Activated CD4-positive, alpha-beta memory T cell treated with anti-CD3 and anti-CD28 coated beads for 36 hours (primary cell): ENCODE measurements at regions of chr4 and their contacts with region 1.

Region 1: GRCh38 chr4:54233277-54233696 is 4.2 kb downstream of the PDGFRA start:
- DNase-seq: peak; percentile 85
- H3K4me3 Mint-ChIP-seq: peak overlapping the region; percentile 63
- H3K27ac Mint-ChIP-seq: no peak overlapping the region
- H3K4me1 Mint-ChIP-seq: peaks cover 24% of the 10 kb centered on the region
- H3K27me3 Mint-ChIP-seq: peaks cover 59% of the 10 kb centered on the region

Region 2: GRCh38 chr4:52545099-52546069 is 1687.9 kb before region 1 on chr4:
- CTCF ChIA-PET with region 1: interaction called, 11 read pairs
- POLR2A ChIA-PET with region 1: no interaction called
- intact Hi-C with region 1: no loop called
- DNase-seq: peak; percentile 75
- H3K4me3 Mint-ChIP-seq: no peak overlapping the region
- H3K27ac Mint-ChIP-seq: no peak overlapping the region
- H3K4me1 Mint-ChIP-seq: no peaks in the 10 kb centered on the region
- H3K27me3 Mint-ChIP-seq: peaks cover 4% of the 10 kb centered on the region

Region 3: DNA sequence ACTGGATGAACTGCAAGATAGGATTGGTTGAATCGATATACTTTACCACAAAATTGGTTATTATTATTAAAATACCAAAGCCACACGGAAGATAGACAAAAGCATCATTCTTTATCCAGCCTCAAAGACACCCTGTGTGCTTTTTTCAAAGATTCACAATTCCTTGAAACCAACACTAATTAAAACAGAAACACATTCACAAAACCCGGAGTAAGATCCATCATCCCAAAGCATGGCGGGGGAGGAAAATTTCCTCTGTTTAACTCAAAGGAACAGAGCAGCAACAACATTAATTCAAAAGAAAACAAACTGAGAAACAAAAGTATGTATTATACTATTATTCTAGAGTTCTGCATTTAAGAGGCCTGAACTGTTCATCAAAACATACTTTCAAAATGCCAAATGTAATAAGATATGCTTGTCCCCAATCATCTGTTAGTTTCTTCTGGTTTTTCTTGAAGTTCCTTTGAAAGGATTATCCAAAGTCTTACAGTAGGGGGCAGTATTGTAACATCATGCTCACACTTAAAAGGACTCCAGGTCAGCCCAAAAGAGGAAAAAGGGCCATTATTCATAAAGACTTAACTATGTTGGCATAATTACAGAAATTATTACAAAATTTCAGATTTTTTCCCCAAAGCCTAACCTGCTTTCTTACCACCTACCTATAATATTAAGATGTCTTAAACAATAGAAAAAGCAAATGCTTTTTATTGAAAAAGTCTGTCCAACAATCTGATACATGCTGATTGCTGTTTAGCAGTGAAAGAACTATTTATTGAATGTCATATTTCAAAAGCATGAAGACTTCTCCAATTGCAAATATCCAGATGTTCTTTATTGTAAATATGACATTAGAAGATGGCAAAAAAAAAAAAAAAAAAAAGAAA is 1036.2 kb before region 1 on chr4:
- CTCF ChIA-PET with region 1: interaction called, 26 read pairs
- POLR2A ChIA-PET with region 1: no interaction called
- intact Hi-C with region 1: loop called (anchors 1 kb)
- DNase-seq: no peak
- H3K4me3 Mint-ChIP-seq: no peak overlapping the region
- H3K27ac Mint-ChIP-seq: no peak overlapping the region
- H3K4me1 Mint-ChIP-seq: peaks cover 2% of the 10 kb centered on the region
- H3K27me3 Mint-ChIP-seq: no peaks in the 10 kb centered on the region

Region 4: DNA sequence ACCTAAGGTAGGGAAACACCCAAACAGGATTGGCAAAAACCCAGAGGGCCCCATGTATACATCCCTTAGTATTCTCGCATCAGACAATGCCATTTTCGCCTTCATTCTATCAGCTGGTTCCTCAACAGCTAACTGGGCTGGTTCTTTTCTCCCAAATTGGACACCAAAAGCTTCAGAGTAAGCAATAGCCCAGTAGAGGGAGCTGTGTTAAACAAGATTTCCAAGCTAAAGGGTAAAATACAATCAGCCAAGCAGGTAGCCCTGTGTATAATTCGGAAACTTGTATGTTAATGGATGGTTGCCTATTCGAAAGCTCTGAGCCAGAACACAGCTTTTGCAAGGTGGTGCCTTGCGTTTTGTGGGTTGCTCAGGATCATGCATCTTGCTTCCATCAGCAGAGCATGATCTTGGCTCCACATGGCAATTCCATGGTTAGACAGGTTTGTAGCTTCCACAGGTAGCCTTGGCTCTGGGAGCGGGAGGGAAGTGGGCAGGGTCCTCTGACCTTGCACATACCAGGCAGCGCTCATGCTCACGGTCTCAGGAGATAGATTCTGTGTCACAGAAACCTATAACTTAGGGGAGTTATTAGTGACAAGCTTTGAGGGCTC is 526.8 kb before region 1 on chr4:
- CTCF ChIA-PET with region 1: interaction called, 12 read pairs
- POLR2A ChIA-PET with region 1: no interaction called
- intact Hi-C with region 1: loop called (anchors 5 kb)
- DNase-seq: no peak
- H3K4me3 Mint-ChIP-seq: no peak overlapping the region
- H3K27ac Mint-ChIP-seq: no peak overlapping the region
- H3K4me1 Mint-ChIP-seq: peaks cover 2% of the 10 kb centered on the region
- H3K27me3 Mint-ChIP-seq: peaks cover 12% of the 10 kb centered on the region

Region 5: DNA sequence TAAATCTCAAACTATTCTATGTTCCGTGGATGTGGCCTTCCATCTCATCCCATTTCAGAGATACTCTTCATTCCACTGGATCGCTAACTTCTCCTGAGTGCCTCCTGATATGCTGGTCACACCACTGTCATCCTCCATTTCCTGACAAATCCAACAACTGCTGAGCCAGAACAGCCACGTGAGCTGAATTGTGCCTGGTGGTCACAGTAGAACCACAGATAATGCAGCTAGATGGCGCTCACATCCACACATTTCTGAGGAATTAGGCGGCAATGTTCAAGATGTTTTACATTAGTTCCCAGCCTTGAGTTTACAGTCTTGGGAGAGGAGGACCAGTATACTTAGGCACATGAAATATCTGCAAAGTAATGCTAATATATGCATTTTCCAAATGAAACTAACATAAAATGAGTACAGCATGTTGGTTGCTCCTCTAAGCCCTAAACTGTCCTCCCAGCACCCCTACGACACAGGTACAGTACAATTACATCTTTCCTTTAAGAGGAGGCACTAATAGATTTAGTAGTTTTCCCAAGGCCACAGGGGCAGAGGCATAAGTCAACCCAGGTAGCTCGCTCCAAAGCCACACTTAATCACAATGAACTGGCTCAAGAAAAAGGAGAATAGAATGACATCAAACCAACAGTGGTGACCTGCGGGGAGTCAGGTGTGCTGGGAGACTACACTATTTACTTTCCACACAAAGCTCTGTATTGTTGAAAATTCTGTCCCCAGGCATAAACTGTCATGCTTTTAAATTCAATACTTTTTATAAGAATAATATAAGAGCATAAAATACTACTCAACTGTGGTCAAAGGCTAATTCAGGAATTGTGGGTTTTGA is 303.1 kb before region 1 on chr4:
- CTCF ChIA-PET with region 1: interaction called, 99 read pairs
- POLR2A ChIA-PET with region 1: no interaction called
- intact Hi-C with region 1: loop called (anchors 5 kb)
- DNase-seq: peak; percentile 68
- H3K4me3 Mint-ChIP-seq: no peak overlapping the region
- H3K27ac Mint-ChIP-seq: no peak overlapping the region
- H3K4me1 Mint-ChIP-seq: no peaks in the 10 kb centered on the region
- H3K27me3 Mint-ChIP-seq: peaks cover 4% of the 10 kb centered on the region

Region 6: GRCh38 chr4:54217642-54218495 is 15.4 kb before region 1 on chr4:
- CTCF ChIA-PET with region 1: interaction called, 49 read pairs
- POLR2A ChIA-PET with region 1: no interaction called
- intact Hi-C with region 1: no loop called
- DNase-seq: peak; percentile 59
- H3K4me3 Mint-ChIP-seq: no peak overlapping the region
- H3K27ac Mint-ChIP-seq: no peak overlapping the region
- H3K4me1 Mint-ChIP-seq: peaks cover 6% of the 10 kb centered on the region
- H3K27me3 Mint-ChIP-seq: peaks cover 31% of the 10 kb centered on the region

Region 7: GRCh38 chr4:54433686-54434085 is 200.4 kb after region 1 on chr4:
- CTCF ChIA-PET with region 1: no interaction called
- POLR2A ChIA-PET with region 1: no interaction called
- intact Hi-C with region 1: no loop called
- DNase-seq: no peak
- H3K4me3 Mint-ChIP-seq: no peak overlapping the region
- H3K27ac Mint-ChIP-seq: no peak overlapping the region
- H3K4me1 Mint-ChIP-seq: no peaks in the 10 kb centered on the region
- H3K27me3 Mint-ChIP-seq: peaks cover 8% of the 10 kb centered on the region